Heart left ventricle (tissue), 16 donors: ENCODE measurements at regions of chr9 and their contacts with region 1.

Region 1: GRCh38 chr9:104991144-104991953 is 63.4 kb upstream of the ABCA1 start:
- DNase-seq: peak; percentile 88 to 96 (median 95)
- ATAC-seq: peak; percentile 75 to 91 (median 86)
- H3K4me3 ChIP-seq: peak overlapping the region; percentile 33 to 86 (median 68)
- H3K27ac ChIP-seq: peak overlapping the region; percentile 88 to 97 (median 95)
- H3K4me1 ChIP-seq: peaks cover 3 to 51% (median 36%) of the 10 kb centered on the region in 12 donors
- H3K27me3 ChIP-seq: no peaks in the 10 kb centered on the region
- CTCF ChIP-seq: no peak
- POLR2A ChIP-seq: peak in 1 of 2 donors; percentile 62

Region 2: DNA sequence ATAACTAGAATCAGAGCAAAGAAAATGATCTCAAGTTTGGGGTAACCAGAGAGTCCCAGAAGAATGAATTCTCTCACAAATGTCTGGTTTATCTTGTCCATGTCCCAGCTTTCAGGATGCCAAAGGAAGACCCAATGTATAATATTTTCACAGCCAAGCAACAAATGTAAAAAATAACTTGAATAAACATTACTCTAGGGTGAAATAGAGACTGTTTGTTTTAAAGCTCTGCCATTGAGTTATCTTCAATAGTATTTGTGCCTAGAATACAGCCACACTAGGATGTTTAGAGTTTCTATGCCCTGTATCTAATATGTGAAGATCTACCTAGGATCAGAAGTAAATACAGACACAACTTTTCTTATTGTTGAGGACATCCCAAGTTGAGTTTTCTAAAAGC is 464.2 kb before region 1 on chr9 and contains the start of gene OR13C4:
- intact Hi-C with region 1: no loop called
- DNase-seq: no peak
- ATAC-seq: no peak
- H3K4me3 ChIP-seq: no peak within 1 kb of the TSS
- H3K27ac ChIP-seq: no peak within 1 kb of the TSS
- H3K4me1 ChIP-seq: no peaks in the 10 kb centered on the region
- H3K27me3 ChIP-seq: no peaks in the 10 kb centered on the region
- CTCF ChIP-seq: no peak
- POLR2A ChIP-seq: no peak
- total RNA-seq, gene OR13C4: not detected

Region 3: GRCh38 chr9:104863180-104863883 is 128.0 kb before region 1 on chr9:
- intact Hi-C with region 1: loop called in 2 of 10 experiments (anchors 5 kb)
- DNase-seq: peak in 2 of 5 donors; percentile 27 to 41
- ATAC-seq: peak; percentile 60 to 81 (median 68)
- H3K4me3 ChIP-seq: no peak overlapping the region
- H3K27ac ChIP-seq: peak overlapping the region in 2 of 12 donors; percentile 26 to 44
- H3K4me1 ChIP-seq: peaks cover 0 to 57% (median 27%) of the 10 kb centered on the region in 12 donors
- H3K27me3 ChIP-seq: no peaks in the 10 kb centered on the region
- CTCF ChIP-seq: peak; percentile 57 to 91 (median 77)
- POLR2A ChIP-seq: no peak

Region 4: DNA sequence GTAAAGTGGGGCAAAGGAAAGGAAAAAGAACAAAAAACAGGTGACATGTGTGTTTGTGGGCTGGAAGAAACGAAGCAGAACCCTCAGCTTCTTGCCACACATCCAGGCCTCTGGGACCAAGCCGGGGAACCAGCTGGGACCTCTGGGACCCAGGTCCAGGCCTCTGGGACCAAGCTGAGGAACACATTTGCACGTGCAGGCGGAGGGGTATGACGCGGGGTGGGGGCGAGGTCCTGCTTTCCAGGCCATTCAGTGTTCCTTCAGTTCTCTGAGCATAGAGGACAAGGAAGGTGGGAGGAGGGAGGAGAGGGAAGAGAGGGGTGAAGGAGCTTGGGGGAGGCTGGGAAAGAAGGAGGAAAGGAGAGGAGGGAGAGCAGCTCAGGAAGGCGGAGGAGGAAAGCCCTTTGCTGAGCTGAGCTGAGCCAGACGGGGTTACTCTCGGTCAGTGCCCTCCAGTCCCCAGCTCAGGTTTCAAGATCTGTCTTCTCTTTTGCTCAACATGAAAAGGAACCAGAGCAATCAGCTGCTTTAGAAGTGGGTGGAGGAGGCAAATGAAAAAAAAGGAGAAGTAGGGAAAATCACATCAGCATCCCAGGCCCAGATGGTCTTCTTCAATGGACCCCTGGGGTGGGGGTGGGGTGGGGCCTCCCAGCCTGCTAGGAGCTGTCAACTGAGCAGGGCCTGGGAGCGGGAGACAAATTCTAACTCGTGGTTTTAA is 122.5 kb before region 1 on chr9:
- intact Hi-C with region 1: loop called in 2 of 10 experiments (anchors 5 kb)
- DNase-seq: peak; percentile 67 to 79 (median 72)
- ATAC-seq: peak; percentile 89 to 93 (median 92)
- H3K4me3 ChIP-seq: no peak overlapping the region
- H3K27ac ChIP-seq: peak overlapping the region in 11 of 12 donors; percentile 36 to 81 (median 64)
- H3K4me1 ChIP-seq: peaks cover 8 to 70% (median 47%) of the 10 kb centered on the region in 12 donors
- H3K27me3 ChIP-seq: no peaks in the 10 kb centered on the region
- CTCF ChIP-seq: no peak
- POLR2A ChIP-seq: no peak

Region 5: GRCh38 chr9:104934691-104935500 is 56.5 kb before region 1 on chr9:
- intact Hi-C with region 1: no loop called
- DNase-seq: no peak
- ATAC-seq: peak in 1 of 4 donors; percentile 57
- H3K4me3 ChIP-seq: no peak overlapping the region
- H3K27ac ChIP-seq: peak overlapping the region in 3 of 12 donors; percentile 25 to 60 (median 39)
- H3K4me1 ChIP-seq: peaks cover 0 to 19% (median 0%) of the 10 kb centered on the region in 12 donors
- H3K27me3 ChIP-seq: no peaks in the 10 kb centered on the region
- CTCF ChIP-seq: no peak
- POLR2A ChIP-seq: no peak

Region 6: GRCh38 chr9:104968025-104968982 is 23.0 kb before region 1 on chr9:
- intact Hi-C with region 1: loop called in 4 of 10 experiments (anchors 1 to 2 kb)
- DNase-seq: peak; percentile 86 to 94 (median 91)
- ATAC-seq: peak; percentile 95 to 98 (median 98)
- H3K4me3 ChIP-seq: peak overlapping the region in 11 of 12 donors; percentile 49 to 95 (median 79)
- H3K27ac ChIP-seq: peak overlapping the region; percentile 69 to 97 (median 86)
- H3K4me1 ChIP-seq: peaks cover 0 to 24% (median 8%) of the 10 kb centered on the region in 12 donors
- H3K27me3 ChIP-seq: no peaks in the 10 kb centered on the region
- CTCF ChIP-seq: peak in 1 of 12 donors; percentile 7
- POLR2A ChIP-seq: peak in 1 of 2 donors; percentile 11

Region 7: DNA sequence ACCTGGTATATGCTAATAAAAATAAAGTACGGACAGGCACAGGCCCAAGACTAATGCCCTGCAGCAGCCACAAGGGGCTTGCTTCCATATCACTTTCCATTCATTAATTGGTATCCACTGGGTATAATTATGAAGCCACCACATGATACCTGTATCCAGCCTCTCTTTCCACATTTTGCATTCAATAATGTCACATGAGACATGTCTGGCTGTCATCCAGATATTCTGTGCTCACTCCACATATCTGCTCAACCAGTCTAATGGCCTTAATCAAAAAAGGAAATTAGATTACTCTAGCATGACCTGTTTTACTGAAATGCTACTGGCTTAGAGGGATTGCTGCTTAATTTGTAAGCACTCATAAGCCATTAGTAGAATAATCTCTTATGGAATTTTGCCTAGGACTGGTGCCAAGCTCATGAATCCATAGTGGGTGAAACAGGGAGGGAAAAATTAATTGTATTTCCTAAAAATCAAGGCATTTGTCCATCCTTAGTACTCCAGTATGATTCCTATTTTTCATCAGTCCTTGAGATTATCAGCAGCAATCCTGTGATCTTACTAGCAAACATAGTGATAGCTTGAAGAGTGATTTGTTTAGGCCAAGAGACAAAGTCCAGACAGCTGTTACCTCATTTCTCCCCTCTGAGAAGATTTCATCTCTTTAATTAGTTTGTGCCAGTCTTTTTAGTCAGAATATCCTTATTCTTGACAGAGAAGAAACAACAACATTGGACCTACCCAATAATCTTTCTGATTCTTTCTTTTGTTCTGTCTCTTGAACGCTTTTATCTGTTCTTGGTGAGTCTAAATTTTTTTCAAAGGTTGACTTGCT is 55.8 kb after region 1 on chr9:
- intact Hi-C with region 1: loop called in 2 of 10 experiments (anchors 5 to 10 kb)
- DNase-seq: no peak
- ATAC-seq: peak in 1 of 4 donors; percentile 7
- H3K4me3 ChIP-seq: no peak overlapping the region
- H3K27ac ChIP-seq: no peak overlapping the region
- H3K4me1 ChIP-seq: peaks cover 0 to 20% (median 3%) of the 10 kb centered on the region in 12 donors
- H3K27me3 ChIP-seq: no peaks in the 10 kb centered on the region
- CTCF ChIP-seq: no peak
- POLR2A ChIP-seq: no peak

Region 8: GRCh38 chr9:105064315-105065097 is 73.2 kb after region 1 on chr9:
- intact Hi-C with region 1: loop called in 4 of 10 experiments (anchors 1 to 5 kb)
- DNase-seq: peak; percentile 87 to 96 (median 93)
- ATAC-seq: peak; percentile 97 to 98 (median 98)
- H3K4me3 ChIP-seq: peak overlapping the region in 3 of 12 donors; percentile 8 to 29 (median 9)
- H3K27ac ChIP-seq: peak overlapping the region in 11 of 12 donors; percentile 55 to 92 (median 72)
- H3K4me1 ChIP-seq: peaks cover 7 to 38% (median 20%) of the 10 kb centered on the region in 12 donors
- H3K27me3 ChIP-seq: no peaks in the 10 kb centered on the region
- CTCF ChIP-seq: peak in 1 of 12 donors; percentile 10
- POLR2A ChIP-seq: peak in 1 of 2 donors; percentile 18

Region 9: GRCh38 chr9:105074501-105075264 is 83.3 kb after region 1 on chr9:
- intact Hi-C with region 1: no loop called
- DNase-seq: no peak
- ATAC-seq: no peak
- H3K4me3 ChIP-seq: no peak overlapping the region
- H3K27ac ChIP-seq: no peak overlapping the region
- H3K4me1 ChIP-seq: no peaks in the 10 kb centered on the region
- H3K27me3 ChIP-seq: no peaks in the 10 kb centered on the region
- CTCF ChIP-seq: no peak
- POLR2A ChIP-seq: no peak